Calu3 (cell line): ENCODE measurements at regions of chr7 and their contacts with region 1.

Region 1: DNA sequence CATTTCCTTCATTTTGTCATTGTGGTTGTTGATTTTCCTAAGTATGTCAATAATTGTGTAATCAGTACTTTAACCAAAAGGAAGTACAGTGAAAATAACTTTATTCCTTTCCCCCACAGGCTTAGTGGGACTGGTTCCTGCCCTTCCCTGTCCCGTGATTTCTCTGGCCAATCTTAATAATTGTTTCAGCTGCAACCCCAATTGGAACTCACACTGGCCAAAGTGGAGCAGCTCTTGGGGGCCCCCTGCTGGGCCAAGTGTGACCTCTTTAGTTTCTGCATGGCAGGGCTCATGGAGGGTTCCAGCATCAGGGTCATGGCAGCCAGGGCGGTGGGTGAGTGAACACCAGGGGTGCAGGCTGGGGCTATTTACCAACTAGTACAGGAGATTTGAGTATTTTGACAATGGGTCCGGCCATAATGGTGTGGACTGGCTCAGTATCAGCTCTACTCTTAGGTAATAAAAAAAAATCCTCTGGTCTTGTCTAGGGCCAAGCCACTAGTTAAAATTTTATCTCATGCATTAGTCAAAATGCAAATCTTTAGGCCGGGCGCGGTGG is 31.7 kb downstream of the CYCS start:
- DNase-seq: peak; percentile 99
- H3K4me3 Mint-ChIP-seq: peak overlapping the region; percentile 64
- H3K27ac Mint-ChIP-seq: peak overlapping the region; percentile 91
- H3K4me1 Mint-ChIP-seq: peaks cover 67% of the 10 kb centered on the region
- H3K27me3 Mint-ChIP-seq: no peaks in the 10 kb centered on the region
- CTCF ChIP-seq: peak; percentile 99

Region 2: GRCh38 chr7:24290004-24290641 is 803.2 kb before region 1 on chr7:
- CTCF ChIA-PET with region 1: no interaction called
- intact Hi-C with region 1: loop called (anchors 5 kb)
- DNase-seq: peak; percentile 59
- H3K4me3 Mint-ChIP-seq: no peak overlapping the region
- H3K27ac Mint-ChIP-seq: no peak overlapping the region
- H3K4me1 Mint-ChIP-seq: peaks cover 13% of the 10 kb centered on the region
- H3K27me3 Mint-ChIP-seq: peaks cover 48% of the 10 kb centered on the region
- CTCF ChIP-seq: peak; percentile 54

Region 3: DNA sequence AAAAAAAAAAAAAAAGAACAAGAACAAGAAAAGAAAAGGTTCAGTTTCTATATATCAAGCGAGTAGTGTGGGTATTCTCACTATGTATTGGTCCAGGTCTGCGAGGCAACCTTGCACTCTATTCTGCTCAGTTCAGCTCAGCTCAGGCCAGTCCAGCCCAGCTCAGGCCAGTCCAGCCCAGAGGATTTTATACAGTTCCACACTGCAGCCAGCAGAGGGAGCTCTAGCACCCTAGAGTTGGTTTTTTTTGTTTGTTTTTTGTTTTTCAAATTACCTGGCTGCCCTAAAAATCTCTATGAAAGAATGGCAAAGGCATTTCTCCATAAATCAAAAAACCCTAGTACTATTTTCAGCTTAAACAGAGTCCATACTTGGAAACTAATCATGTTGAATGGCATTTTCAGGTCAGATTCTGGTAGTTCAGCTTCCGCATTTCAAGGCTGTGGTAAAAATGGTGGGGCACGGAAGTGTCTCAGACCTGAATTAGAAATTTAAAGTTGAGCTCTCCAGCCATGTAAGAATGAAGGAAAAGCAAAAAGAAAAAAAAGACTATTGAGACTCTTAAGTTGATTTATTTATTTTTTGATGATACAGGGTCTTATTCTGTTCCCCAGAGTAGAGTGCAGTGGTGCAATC is 280.9 kb before region 1 on chr7:
- CTCF ChIA-PET with region 1: interaction called, 60 read pairs
- intact Hi-C with region 1: loop called (anchors 1 kb)
- DNase-seq: peak; percentile 77
- H3K4me3 Mint-ChIP-seq: no peak overlapping the region
- H3K27ac Mint-ChIP-seq: no peak overlapping the region
- H3K4me1 Mint-ChIP-seq: peaks cover 4% of the 10 kb centered on the region
- H3K27me3 Mint-ChIP-seq: no peaks in the 10 kb centered on the region
- CTCF ChIP-seq: peak; percentile 92

Region 4: GRCh38 chr7:24825931-24826661 is 267.3 kb before region 1 on chr7:
- CTCF ChIA-PET with region 1: interaction called, 57 read pairs
- intact Hi-C with region 1: loop called (anchors 1 kb)
- DNase-seq: peak; percentile 94
- H3K4me3 Mint-ChIP-seq: peak overlapping the region; percentile 41
- H3K27ac Mint-ChIP-seq: peak overlapping the region; percentile 88
- H3K4me1 Mint-ChIP-seq: peaks cover 80% of the 10 kb centered on the region
- H3K27me3 Mint-ChIP-seq: no peaks in the 10 kb centered on the region
- CTCF ChIP-seq: no peak

Region 5: GRCh38 chr7:24896031-24896501 is 197.3 kb before region 1 on chr7:
- CTCF ChIA-PET with region 1: interaction called, 10 read pairs
- intact Hi-C with region 1: no loop called
- DNase-seq: no peak
- H3K4me3 Mint-ChIP-seq: no peak overlapping the region
- H3K27ac Mint-ChIP-seq: no peak overlapping the region
- H3K4me1 Mint-ChIP-seq: peaks cover 29% of the 10 kb centered on the region
- H3K27me3 Mint-ChIP-seq: no peaks in the 10 kb centered on the region
- CTCF ChIP-seq: peak; percentile 29

Region 6: DNA sequence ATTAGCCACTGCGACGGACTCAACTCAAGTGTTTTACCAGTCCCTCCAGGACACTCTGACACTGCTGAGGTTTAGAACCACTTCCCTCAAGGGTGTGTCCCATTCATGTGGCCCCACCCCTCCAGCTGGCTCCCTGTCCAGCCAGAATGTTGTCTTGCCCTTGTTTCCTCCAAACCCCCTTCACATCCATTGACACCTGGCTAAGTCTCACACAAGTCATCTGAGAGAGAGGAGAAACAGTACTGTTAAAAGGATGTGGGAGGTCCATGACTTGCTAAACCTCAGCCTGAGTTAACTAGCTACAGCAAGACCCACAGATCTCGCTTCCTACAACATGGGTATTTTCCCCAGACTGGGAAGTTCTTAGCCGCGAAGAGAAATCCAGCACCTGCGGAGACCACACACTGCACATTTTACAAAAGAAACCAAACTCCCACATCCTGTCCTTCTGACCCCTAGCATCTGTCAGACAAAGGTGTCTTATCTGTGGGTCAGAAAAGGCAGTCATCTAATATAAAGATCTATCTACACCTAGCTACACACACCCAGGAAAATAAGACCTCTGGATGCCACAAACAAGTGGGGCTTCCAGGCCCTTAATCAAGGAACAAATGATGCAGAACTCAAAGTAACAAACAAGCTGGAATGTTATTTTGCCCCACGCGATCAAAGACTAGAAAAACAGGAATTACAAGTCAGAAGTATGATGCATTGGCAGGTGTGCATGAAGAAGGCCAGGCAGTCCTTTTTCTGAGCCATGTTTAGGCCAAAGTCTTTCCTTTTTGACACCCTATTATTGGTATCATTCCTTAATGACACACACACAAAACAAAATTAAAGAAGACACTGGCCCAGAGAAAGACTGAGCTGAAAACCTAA is 127.3 kb before region 1 on chr7:
- CTCF ChIA-PET with region 1: interaction called, 4 read pairs
- intact Hi-C with region 1: loop called (anchors 5 kb)
- DNase-seq: peak; percentile 81
- H3K4me3 Mint-ChIP-seq: peak overlapping the region; percentile 65
- H3K27ac Mint-ChIP-seq: peak overlapping the region; percentile 98
- H3K4me1 Mint-ChIP-seq: peaks cover 80% of the 10 kb centered on the region
- H3K27me3 Mint-ChIP-seq: no peaks in the 10 kb centered on the region
- CTCF ChIP-seq: no peak

Region 7: GRCh38 chr7:25009257-25009656 is 84.1 kb before region 1 on chr7:
- CTCF ChIA-PET with region 1: no interaction called
- intact Hi-C with region 1: no loop called
- DNase-seq: no peak
- H3K4me3 Mint-ChIP-seq: no peak overlapping the region
- H3K27ac Mint-ChIP-seq: no peak overlapping the region
- H3K4me1 Mint-ChIP-seq: peaks cover 14% of the 10 kb centered on the region
- H3K27me3 Mint-ChIP-seq: no peaks in the 10 kb centered on the region
- CTCF ChIP-seq: no peak

Region 8: DNA sequence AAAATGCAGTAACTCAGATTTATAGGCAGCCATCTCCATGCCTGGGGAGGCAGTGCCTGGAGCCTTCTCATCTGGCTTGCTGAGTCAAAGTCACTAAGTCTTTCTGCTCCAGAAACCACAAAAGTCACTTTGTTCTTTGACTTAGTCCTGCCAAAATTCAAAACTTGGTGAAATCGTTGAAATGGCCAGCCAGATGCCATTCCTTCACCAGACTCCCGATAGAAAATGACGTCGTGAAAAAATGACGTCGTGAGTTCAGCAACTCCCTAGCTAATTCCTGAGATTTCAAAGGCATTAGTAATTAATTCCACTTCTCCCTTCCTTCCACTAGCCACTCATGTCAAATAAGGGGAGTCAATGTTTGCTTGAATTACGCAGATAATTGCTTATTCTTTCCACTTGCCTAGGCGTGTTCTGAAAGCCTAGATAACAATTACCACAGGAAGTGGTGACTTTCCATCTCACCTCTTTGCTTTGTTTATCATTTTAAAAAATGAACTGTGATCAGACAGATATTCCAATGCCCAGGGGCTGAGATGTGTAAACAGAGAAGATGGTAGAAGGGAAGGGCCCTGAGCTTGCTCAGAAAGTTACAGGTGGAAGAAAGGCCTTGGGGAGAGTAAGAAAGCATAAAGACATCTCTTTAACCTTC is 64.9 kb before region 1 on chr7:
- CTCF ChIA-PET with region 1: interaction called, 11 read pairs
- intact Hi-C with region 1: loop called (anchors 1 kb)
- DNase-seq: peak; percentile 68
- H3K4me3 Mint-ChIP-seq: peak overlapping the region; percentile 26
- H3K27ac Mint-ChIP-seq: peak overlapping the region; percentile 96
- H3K4me1 Mint-ChIP-seq: peaks cover 94% of the 10 kb centered on the region
- H3K27me3 Mint-ChIP-seq: no peaks in the 10 kb centered on the region
- CTCF ChIP-seq: no peak